ENCODE measurements at regions of chr1 and their contacts with region 1.

Region 1: DNA sequence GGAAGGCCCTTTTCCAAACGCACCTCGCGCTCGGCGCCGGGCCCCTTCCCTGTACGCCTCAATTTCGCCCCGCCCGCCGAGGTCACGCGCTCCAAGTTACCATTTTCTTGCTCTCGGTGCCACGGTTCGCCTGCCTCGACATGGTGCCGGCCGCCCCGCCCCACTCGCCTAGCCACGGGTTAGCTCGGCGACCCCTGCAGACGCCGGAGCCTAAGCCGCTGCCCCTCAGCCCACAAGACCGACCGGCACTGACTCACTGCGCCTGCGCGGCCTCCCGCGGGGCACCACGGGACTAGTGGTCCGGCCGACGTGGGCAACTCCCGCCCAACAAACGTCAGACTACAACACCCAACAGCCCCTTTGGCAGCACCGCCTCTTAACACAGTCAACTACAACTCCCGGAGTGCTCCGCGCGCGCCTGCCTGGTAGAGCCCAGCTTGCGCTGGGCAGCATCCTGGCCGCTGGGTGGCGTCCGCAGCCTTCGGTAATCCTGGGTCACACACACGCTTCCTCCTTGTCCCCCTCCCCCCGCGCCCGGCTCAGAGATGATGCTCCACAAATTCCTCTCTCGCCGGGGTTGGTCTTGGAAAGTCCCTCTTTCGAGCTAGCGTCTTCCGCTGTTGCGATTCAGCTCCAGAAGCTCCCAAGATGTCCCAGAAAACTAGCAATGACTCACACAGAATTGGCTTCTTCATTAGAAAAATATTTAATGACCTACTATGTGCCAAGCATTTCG is at the start of gene TRAPPC3:
- DNase-seq: peak; percentile 99 to 100 (median 100)

Region 2: DNA sequence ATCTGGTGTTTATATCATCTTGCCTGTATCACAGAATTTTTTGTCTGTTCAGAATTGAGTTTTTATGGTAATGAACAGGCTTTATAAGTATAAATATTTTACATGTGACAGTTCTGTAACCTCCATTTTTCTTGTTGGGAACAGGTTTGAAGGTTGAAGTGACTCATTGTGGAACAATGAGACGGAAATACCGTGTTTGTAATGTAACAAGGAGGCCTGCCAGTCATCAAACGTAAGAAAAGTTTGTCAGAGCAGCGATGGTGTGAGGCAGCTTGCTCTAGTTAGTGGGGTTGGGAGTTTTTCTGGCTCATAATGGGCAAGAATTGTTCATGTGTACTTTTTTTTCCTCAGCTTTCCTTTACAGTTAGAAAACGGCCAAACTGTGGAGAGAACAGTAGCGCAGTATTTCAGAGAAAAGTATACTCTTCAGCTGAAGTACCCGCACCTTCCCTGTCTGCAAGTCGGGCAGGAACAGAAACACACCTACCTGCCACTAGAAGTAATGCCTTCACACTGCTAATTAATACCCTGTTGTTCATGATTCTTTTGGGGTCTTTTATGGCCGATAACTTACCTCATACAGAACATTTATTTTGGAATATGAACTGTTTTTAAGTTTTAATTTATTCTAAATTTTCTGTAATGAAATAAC is 140.7 kb before region 1 on chr1:
- intact Hi-C with region 1: no loop called
- DNase-seq: no peak

Region 3: GRCh38 chr1:36187800-36188593 is 38.6 kb after region 1 on chr1:
- intact Hi-C with region 1: loop called (anchors 1 kb)
- DNase-seq: peak; percentile 77 to 98 (median 88)

Region 4: DNA sequence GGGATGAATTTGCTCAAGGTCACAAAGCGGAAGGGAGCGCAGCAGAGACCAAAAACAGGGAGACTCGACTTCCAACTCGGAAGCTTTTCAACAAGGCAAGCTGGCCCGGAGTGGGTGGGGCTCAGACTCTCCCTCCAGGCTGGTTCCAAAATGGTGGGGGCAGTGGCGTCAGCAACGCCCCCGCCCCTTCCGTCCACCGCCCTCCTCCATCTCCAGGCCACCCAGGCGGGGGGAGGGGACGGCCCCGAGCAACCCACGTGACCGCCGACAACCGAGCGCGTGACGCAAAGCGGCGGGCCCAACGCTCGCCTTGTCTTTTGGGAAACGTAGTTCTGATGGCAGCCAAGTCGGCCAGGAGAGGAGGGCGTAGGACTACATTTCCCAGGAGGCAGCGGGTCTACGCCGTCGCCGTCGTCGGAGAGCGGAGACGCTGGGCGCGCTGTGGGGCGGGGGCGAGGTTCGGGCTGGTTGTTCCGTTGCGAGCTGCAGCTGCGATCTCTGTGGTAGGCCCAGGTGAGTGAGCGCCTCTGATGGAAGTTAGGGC is 74.7 kb after region 1 on chr1 and contains the start of gene THRAP3:
- intact Hi-C with region 1: loop called (anchors 1 kb)
- DNase-seq: peak; percentile 99 to 100 (median 100)

Region 5: GRCh38 chr1:36285448-36286101 is 136.2 kb after region 1 on chr1:
- intact Hi-C with region 1: loop called (anchors 1 kb)
- DNase-seq: peak in 5 of 10 donors; percentile 21 to 65 (median 43)

Region 6: DNA sequence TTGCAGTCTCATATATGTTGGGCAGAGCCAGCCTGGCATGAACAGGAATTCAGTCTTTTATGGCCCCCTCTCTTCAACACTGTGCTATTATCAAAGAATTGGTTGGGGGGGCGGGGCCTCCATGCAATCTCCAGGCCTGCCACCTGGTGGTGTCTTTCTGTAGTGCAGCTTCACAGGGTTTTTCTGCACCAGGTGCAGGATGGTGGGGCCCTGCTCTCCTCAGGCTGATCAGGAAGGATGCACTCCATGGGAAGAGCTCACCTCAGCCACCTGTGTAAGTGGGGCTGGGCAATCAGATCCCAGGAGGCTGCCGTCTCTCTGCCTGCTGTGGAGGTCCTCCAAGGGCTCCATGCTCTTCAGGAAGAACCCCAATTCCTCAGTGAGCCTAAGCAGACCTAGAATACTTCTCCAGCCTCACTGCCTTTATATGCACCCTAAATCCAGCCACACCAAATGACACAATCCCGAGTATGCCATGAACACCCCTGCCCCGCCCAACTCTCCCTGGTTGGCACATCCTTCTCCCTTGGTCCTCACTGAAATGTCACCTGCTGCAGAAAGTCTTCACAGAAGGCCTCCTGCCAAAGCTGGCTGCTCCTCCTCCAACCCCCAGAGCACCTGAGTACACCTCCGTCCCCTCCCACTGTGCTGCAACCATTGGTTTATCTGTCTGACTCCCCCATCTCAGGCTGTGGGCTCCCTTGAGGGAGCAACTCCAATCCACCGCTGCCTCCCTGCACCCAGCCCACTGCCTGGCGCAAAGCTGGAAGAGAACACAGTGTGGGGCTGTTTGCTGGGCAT is 219.9 kb after region 1 on chr1:
- intact Hi-C with region 1: loop called (anchors 10 kb)
- DNase-seq: peak in 9 of 10 donors; percentile 48 to 95 (median 76)